HCT116 (cell line): ENCODE measurements at regions of chr10 and their contacts with region 1.

Region 1: DNA sequence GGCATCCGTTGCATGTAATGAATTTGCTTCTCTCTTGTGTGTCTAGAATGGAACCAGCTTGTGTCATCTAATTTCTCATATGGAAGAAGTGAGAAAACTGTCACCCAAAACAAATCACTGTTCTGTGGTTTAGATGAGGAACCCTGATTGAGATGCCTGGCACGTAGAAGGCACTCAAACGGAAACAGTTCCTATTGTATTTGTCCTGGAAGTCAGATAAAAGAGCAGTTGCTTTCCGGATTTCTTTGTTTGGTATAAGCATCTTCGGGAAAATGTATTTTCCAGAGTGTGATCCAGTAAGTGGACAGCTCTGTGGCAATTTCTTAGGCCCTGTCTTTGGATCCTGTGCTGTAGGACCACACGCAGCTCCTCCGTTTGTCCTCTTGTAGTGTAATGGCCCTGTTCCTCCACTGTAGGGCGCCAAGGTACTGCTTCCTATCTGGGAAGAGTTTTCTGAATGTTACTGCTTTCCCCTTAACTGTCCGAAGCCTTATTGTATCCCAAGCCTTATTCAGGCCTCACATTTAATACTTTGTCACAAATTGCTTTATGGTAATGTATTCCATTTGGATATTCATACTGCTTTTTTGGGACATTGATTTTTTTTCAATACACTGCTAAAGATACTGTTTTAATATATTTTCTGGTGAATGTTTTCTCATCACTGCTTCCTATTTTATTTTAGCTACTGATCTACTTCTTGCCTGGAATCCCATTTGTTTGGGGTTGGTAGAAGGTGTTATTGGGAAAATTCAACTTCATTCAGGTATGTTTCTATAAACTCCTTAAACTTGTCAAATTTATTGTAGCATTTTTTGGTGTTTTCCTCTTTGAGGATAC is 24.8 kb downstream of the INPP5F start:
- DNase-seq: peak; percentile 63
- ATAC-seq: peak; percentile 98
- H3K4me3 ChIP-seq: no peak overlapping the region
- H3K27ac ChIP-seq: no peak overlapping the region
- H3K4me1 ChIP-seq: no peaks in the 10 kb centered on the region
- H3K27me3 ChIP-seq: no peaks in the 10 kb centered on the region
- CTCF ChIP-seq: peak; percentile 89 to 99 (median 99)
- POLR2A ChIP-seq: no peak
- RAD21 ChIP-seq: peak; percentile 97

Region 2: DNA sequence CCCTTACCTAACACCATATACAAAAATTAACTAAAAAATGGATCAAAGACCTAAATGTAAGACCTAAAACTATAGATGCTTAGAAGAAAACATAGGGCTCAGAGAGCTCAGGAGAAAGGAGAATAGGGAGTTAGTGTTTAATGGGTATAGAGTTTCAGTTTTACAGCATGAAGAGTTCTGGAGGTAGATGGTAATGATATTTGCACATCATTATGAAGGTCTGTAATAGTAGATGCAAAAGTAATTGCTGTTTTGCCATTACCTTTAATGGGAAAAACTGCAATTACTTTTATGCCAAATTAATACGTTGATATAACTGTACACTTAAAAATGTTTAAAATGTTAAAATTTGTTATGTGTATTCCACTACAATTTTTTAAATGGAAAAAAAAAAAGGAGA is 760.3 kb before region 1 on chr10:
- CTCF ChIA-PET with region 1: no interaction called
- POLR2A ChIA-PET with region 1: no interaction called
- RAD21 ChIA-PET with region 1: no interaction called
- intact Hi-C with region 1: no loop called
- DNase-seq: no peak
- ATAC-seq: no peak
- H3K4me3 ChIP-seq: no peak overlapping the region
- H3K27ac ChIP-seq: no peak overlapping the region
- H3K4me1 ChIP-seq: no peaks in the 10 kb centered on the region
- H3K27me3 ChIP-seq: no peaks in the 10 kb centered on the region
- CTCF ChIP-seq: no peak
- POLR2A ChIP-seq: no peak
- RAD21 ChIP-seq: no peak

Region 3: GRCh38 chr10:119686439-119687191 is 64.0 kb before region 1 on chr10:
- CTCF ChIA-PET with region 1: interaction called, 13 read pairs
- POLR2A ChIA-PET with region 1: no interaction called
- RAD21 ChIA-PET with region 1: no interaction called
- intact Hi-C with region 1: loop called (anchors 1 kb)
- DNase-seq: peak; percentile 75
- ATAC-seq: peak; percentile 88
- H3K4me3 ChIP-seq: no peak overlapping the region
- H3K27ac ChIP-seq: no peak overlapping the region
- H3K4me1 ChIP-seq: peaks cover 11 to 24% of the 10 kb centered on the region in 2 experiments
- H3K27me3 ChIP-seq: no peaks in the 10 kb centered on the region
- CTCF ChIP-seq: peak; percentile 90 to 99 (median 90)
- POLR2A ChIP-seq: no peak
- RAD21 ChIP-seq: peak; percentile 99

Region 4: DNA sequence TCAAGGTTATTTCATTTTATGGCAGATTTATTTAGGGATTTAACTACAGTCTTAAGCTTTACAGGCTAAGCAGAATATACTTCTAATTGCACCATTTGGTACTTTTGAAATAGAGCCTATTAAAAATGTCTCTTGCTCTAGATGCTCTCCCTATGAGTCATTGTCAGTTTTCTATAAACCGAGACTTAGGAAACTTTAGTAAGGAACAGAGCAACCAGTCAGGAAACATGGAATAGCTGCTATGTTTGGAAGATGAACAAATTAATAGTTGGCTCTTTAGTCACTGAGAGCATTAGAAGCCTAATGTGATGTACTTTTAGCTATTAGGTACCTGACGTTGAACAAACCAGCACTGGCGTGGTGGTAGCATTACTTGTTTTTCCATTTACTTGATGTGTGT is 10.5 kb after region 1 on chr10:
- CTCF ChIA-PET with region 1: interaction called, 23 read pairs
- POLR2A ChIA-PET with region 1: no interaction called
- RAD21 ChIA-PET with region 1: no interaction called
- intact Hi-C with region 1: no loop called
- DNase-seq: no peak
- ATAC-seq: no peak
- H3K4me3 ChIP-seq: no peak overlapping the region
- H3K27ac ChIP-seq: no peak overlapping the region
- H3K4me1 ChIP-seq: peaks cover 0 to 3% of the 10 kb centered on the region in 2 experiments; a peak in 2 of 4 replicates
- H3K27me3 ChIP-seq: no peaks in the 10 kb centered on the region
- CTCF ChIP-seq: no peak
- POLR2A ChIP-seq: no peak
- RAD21 ChIP-seq: no peak

Region 5: DNA sequence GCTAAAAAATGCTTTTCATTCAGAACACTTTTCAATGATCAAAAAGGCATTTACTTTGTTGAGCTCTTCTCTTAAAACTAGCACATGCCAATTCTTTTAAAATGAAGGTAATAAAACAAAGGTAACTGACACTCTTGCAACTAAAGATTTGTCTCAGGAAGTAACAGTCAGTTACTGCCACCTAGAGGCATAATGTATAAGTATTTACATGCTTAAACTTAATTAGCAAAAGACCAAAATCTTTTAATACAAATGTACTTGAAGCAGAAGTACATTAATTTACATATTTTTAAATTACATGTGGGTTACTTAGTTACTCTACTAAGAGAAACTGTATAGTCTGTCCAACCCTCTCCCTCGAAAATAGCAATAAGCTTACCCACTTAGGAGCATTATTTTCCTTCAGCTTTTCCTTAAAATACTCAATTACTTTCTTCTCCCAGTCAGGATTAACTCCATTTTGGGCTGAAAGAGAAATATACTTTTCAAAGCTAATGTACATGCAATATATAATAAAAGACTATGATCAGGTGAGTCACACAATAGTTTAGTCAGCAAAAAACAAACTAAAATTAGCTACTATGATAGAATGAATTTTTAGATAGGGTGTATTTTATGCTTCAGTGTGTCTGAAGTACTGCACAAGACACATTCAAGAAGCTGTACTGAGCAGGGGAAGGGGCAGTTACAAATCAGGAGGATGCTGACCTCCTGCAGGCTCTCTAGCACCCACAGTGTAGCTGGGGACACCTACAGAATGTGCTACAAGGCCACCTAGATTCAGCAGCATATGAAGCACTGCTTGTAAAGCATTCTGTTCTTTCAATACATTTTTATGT is 109.0 kb after region 1 on chr10:
- CTCF ChIA-PET with region 1: interaction called, 65 read pairs
- POLR2A ChIA-PET with region 1: no interaction called
- RAD21 ChIA-PET with region 1: interaction called in 1 of 2 experiments, 6 read pairs
- intact Hi-C with region 1: loop called (anchors 1 kb)
- DNase-seq: peak; percentile 59
- ATAC-seq: peak; percentile 69
- H3K4me3 ChIP-seq: no peak overlapping the region
- H3K27ac ChIP-seq: no peak overlapping the region
- H3K4me1 ChIP-seq: no peaks in the 10 kb centered on the region
- H3K27me3 ChIP-seq: no peaks in the 10 kb centered on the region
- CTCF ChIP-seq: peak; percentile 60 to 93 (median 91)
- POLR2A ChIP-seq: no peak
- RAD21 ChIP-seq: peak; percentile 93